Endothelial cell of umbilical vein (primary cell): ENCODE measurements at regions of chr10 and their contacts with region 1.

Region 1: DNA sequence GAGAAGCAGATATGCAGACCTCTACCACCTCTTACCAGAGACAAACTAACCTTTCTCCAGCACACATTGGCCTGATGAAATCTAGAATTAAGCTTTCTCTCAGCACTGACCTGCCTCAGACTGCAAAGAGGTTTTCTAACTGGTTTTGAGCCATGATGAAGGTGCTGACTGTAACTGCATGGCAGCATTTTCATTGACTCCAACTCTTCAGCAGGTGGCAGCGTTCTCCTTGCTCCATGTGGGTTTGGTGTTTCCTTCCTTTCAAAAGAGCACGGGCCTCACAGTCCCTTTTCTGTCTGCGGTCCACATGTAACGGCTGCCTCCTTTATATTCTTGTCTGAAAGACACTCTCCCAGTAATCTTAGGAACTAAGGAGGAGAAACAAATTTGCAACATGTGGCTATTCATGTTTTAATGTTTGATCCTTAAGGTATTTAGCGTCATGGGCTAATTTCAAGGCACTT is 12.6 kb downstream of the KLLN start:
- DNase-seq: peak; percentile 54
- H3K4me3 ChIP-seq: no peak overlapping the region
- H3K27ac ChIP-seq: no peak overlapping the region
- H3K4me1 ChIP-seq: no peaks in the 10 kb centered on the region
- H3K27me3 ChIP-seq: no peaks in the 10 kb centered on the region
- CTCF ChIP-seq: peak; percentile 46 to 65
- POLR2A ChIP-seq: no peak

Region 2: DNA sequence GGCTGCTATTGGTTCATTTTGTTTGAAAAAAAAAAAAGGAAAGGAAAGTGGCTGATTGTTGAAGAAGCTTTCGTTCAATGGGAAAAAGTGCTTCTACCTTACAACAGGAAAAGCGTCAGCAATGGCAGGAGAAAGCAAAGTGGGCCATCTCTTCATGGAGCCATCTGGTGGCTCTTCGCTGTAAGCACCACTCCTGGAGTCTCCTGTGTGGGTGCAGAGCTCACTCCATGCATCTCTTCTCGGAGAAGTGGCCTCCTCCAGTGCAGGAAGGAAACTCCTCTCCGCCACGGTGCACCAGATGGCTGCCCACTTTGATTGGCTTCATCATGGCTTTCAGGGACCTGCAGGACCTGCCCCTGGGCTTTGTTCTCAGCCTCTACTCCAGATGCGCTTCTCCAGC is 263.6 kb after region 1 on chr10:
- CTCF ChIA-PET with region 1: interaction called, 27 read pairs
- POLR2A ChIA-PET with region 1: no interaction called
- dilution Hi-C with region 1: no loop called
- intact Hi-C with region 1: loop called (anchors 1 kb)
- DNase-seq: peak; percentile 51
- H3K4me3 ChIP-seq: no peak overlapping the region
- H3K27ac ChIP-seq: no peak overlapping the region
- H3K4me1 ChIP-seq: no peaks in the 10 kb centered on the region
- H3K27me3 ChIP-seq: no peaks in the 10 kb centered on the region
- CTCF ChIP-seq: peak; percentile 42 to 71
- POLR2A ChIP-seq: no peak

Region 3: GRCh38 chr10:88618496-88618895 is 767.7 kb after region 1 on chr10:
- CTCF ChIA-PET with region 1: no interaction called
- POLR2A ChIA-PET with region 1: no interaction called
- dilution Hi-C with region 1: no loop called
- intact Hi-C with region 1: no loop called
- DNase-seq: no peak
- H3K4me3 ChIP-seq: no peak overlapping the region
- H3K27ac ChIP-seq: no peak overlapping the region
- H3K4me1 ChIP-seq: no peaks in the 10 kb centered on the region
- H3K27me3 ChIP-seq: no peaks in the 10 kb centered on the region
- CTCF ChIP-seq: no peak
- POLR2A ChIP-seq: no peak